ENCODE measurements at regions of chr12 and their contacts with region 1.

Region 1: GRCh38 chr12:71746983-71747611 is 7.6 kb upstream of the RAB21 start:
- DNase-seq: peak; percentile 49
- CTCF ChIP-seq: peak; percentile 89

Region 2: GRCh38 chr12:71415336-71416231 is 331.5 kb before region 1 on chr12:
- CTCF ChIA-PET with region 1: interaction called, 72 read pairs
- POLR2A ChIA-PET with region 1: no interaction called
- DNase-seq: peak; percentile 50
- CTCF ChIP-seq: peak; percentile 78

Region 3: GRCh38 chr12:71599210-71599609 is 147.9 kb before region 1 on chr12:
- CTCF ChIA-PET with region 1: no interaction called
- POLR2A ChIA-PET with region 1: no interaction called
- DNase-seq: no peak
- CTCF ChIP-seq: no peak

Region 4: GRCh38 chr12:71642264-71642663 is 104.8 kb before region 1 on chr12:
- CTCF ChIA-PET with region 1: interaction called, 51 read pairs
- POLR2A ChIA-PET with region 1: no interaction called
- DNase-seq: no peak
- CTCF ChIP-seq: no peak

Region 5: GRCh38 chr12:71685914-71686665 is 61.0 kb before region 1 on chr12 and contains the start of gene TMEM19:
- CTCF ChIA-PET with region 1: interaction called, 31 read pairs
- POLR2A ChIA-PET with region 1: no interaction called
- DNase-seq: peak; percentile 90
- CTCF ChIP-seq: peak; percentile 58

Region 6: GRCh38 chr12:71708658-71709057 is 38.4 kb before region 1 on chr12:
- CTCF ChIA-PET with region 1: interaction called, 10 read pairs
- POLR2A ChIA-PET with region 1: no interaction called
- DNase-seq: no peak
- CTCF ChIP-seq: no peak

Region 7: GRCh38 chr12:71768900-71769299 is 21.8 kb after region 1 on chr12:
- CTCF ChIA-PET with region 1: interaction called, 12 read pairs
- POLR2A ChIA-PET with region 1: no interaction called
- DNase-seq: no peak
- CTCF ChIP-seq: no peak